Astrocyte of the cerebellum (primary cell): ENCODE measurements at regions of chr5 and their contacts with region 1.

Region 1: DNA sequence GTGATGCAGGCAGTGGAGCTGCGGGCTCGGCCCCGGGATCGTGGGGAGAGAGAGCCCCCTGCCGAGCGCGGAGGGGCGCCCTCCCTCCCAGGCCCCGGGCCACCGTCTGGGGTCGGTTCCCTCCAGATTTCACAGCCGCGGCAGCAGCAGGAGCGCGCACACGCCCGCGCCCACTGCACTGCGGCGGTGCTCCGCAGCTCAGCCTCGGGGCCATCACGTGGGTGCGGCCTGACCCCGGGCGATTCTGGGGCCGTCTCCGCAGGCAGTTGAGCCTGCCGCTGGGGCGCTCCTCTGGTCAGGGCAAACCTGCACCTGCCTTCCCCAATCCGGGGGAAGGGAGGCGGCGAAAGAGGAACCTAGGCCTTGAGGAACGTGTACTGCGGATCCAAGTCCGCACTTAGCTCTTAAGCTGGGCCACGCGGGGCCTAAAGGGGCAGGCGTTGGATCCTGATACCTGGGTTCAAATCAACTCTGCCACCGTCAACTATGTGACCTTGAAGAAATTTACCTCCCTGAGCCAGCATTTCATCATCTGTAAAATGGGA is 9.4 kb upstream of the DELE1 start:
- DNase-seq: no peak
- H3K4me3 ChIP-seq: peak overlapping the region; percentile 31
- CTCF ChIP-seq: no peak

Region 2: GRCh38 chr5:141821361-141821925 is 92.8 kb before region 1 on chr5:
- in situ Hi-C with region 1: loop called (anchors 5 kb)
- DNase-seq: peak; percentile 11
- H3K4me3 ChIP-seq: no peak overlapping the region
- CTCF ChIP-seq: no peak

Region 3: GRCh38 chr5:141866149-141867120 is 47.8 kb before region 1 on chr5:
- in situ Hi-C with region 1: no loop called
- DNase-seq: no peak
- H3K4me3 ChIP-seq: no peak overlapping the region
- CTCF ChIP-seq: no peak